Psoas muscle (tissue), 8 donors: ENCODE measurements at regions of chr20 and their contacts with region 1.

Region 1: DNA sequence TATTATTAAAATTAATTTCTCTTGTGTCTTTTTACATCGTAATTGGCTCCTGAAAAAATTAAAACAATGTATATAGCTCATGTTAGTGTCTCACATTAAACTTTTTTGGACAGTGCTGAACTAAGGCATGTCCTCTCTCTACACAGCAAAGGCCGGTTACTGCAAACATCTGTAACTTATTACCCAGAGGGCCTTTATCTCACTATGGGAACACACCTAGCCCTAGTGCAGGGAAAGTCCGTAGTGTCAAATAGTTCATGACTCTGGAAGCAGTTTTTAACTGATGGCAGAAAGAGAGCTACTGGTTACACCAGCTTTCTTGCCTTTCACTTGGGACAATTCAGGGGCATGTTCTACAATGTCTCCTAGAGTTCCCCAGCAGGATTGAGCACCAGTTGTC is 82.2 kb downstream of the PAK5 start:
- DNase-seq: no peak
- ATAC-seq: no peak
- H3K4me3 ChIP-seq: no peak overlapping the region
- H3K27ac ChIP-seq: no peak overlapping the region
- H3K4me1 ChIP-seq: no peaks in the 10 kb centered on the region
- H3K27me3 ChIP-seq: no peaks in the 10 kb centered on the region
- CTCF ChIP-seq: no peak

Region 2: DNA sequence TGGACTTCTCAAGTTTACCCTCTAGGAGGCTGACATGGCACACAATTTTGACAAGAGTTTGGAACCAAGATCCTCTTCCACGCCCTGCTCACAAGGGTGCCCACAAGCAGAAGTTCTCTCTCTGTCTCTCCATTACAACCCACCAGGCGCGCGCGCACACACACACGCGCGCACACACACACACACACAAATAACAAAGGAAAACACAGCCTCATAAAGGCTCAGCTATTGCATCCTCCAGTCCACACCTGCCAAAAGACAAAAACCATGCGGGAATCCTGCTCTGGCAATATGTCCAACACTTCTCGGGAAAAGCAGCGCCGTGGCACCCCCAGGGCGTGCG is 81.3 kb after region 1 on chr20:
- intact Hi-C with region 1: no loop called
- DNase-seq: no peak
- ATAC-seq: no peak
- H3K4me3 ChIP-seq: no peak overlapping the region
- H3K27ac ChIP-seq: no peak overlapping the region
- H3K4me1 ChIP-seq: no peaks in the 10 kb centered on the region
- H3K27me3 ChIP-seq: peaks cover 0 to 22% (median 6%) of the 10 kb centered on the region in 3 donors
- CTCF ChIP-seq: no peak

Region 3: DNA sequence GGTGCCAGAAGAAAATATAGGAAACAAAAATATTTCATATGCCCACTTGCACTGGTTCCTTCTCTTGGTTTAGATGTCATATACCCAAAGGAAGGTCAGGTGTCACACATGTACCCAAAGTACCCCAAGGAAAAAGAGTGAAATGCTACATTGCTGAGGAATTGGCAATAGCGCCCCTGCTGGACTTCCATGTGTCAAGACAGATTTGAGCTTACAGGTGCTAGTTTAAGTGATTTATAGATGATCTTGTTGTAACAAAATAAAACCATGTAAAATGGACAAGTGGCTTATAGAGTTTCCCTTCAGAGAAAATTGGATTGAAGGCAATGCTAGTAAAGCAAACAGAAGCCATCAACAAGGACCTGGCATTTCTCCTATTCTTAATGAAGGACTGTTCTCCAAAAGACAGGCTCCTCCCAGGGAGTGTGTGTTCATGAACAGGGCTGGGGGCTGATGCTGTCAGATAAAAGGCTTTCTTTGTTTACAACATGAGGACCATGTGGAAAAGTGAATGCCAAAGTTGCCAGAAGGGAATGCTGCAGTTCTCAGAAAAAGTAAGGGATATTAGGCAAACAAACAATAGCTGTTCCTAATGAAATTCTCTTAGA is 146.5 kb after region 1 on chr20:
- intact Hi-C with region 1: loop called in 1 of 2 experiments (anchors 2 kb)
- DNase-seq: no peak
- ATAC-seq: no peak
- H3K4me3 ChIP-seq: no peak overlapping the region
- H3K27ac ChIP-seq: no peak overlapping the region
- H3K4me1 ChIP-seq: no peaks in the 10 kb centered on the region
- H3K27me3 ChIP-seq: no peaks in the 10 kb centered on the region
- CTCF ChIP-seq: no peak